CD4-positive, alpha-beta T cell (primary cell): ENCODE measurements at regions of chr4 and their contacts with region 1.

Region 1: GRCh38 chr4:77156533-77156911 is 485 bp upstream of the CCNG2 start:
- DNase-seq: peak; percentile 90 to 100 (median 96)
- ATAC-seq: peak; percentile 95
- H3K4me3 ChIP-seq: peak overlapping the region; percentile 89
- H3K4me3 Mint-ChIP-seq: peak overlapping the region; percentile 95
- H3K27ac ChIP-seq: peak overlapping the region; percentile 52 to 71
- H3K27ac Mint-ChIP-seq: peak overlapping the region; percentile 97
- H3K4me1 ChIP-seq: peaks cover 20% of the 10 kb centered on the region
- H3K4me1 Mint-ChIP-seq: peaks cover 54% of the 10 kb centered on the region
- H3K27me3 ChIP-seq: no peaks in the 10 kb centered on the region
- H3K27me3 Mint-ChIP-seq: peaks cover 5% of the 10 kb centered on the region
- CTCF ChIP-seq: no peak

Region 2: DNA sequence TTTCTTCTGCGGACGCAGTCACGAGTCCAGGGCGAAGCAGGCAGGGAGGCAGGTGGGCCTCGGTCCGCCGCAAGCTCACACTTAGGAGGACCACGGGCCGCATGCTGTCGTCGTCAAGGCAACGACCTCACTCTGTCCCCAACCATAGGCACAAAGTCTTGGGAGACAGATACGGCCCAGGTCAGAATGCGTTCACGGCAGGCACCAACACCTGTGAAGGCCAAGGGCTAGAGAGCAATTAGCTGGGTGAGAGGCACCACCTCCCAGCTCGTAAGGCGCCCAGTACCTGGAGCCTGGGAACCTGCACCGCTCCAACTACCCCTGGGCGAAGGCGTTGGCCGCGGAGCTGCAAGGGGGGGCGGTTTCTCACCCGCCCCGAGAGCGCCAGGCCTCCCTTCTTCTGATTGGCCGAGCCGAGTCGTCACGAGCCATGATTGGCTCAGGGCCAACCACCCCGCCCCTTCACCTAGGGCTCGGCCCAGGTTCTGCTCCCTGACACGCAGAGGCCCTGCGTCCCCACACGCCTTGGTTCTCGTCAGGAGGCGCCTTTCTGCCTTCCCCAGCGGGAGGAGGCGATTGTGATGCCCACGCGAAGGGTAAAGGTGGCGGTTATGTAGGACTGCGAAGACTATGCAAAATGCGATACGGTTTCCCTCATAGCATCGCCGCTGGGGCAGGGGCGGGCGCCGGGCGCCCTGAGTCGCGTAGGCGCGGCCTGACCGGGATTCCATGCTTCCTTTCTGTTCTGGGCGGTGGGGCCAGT is 1526.2 kb before region 1 on chr4 and contains the start of gene CDKL2:
- CTCF ChIA-PET with region 1: no interaction called
- POLR2A ChIA-PET with region 1: no interaction called
- intact Hi-C with region 1: loop called in 1 of 2 experiments (anchors 5 kb)
- DNase-seq: peak; percentile 88 to 96 (median 92)
- ATAC-seq: peak; percentile 99
- H3K4me3 ChIP-seq: peak within 1 kb of the TSS; percentile 85
- H3K4me3 Mint-ChIP-seq: peak within 1 kb of the TSS; percentile 90
- H3K27ac ChIP-seq: peak within 1 kb of the TSS in 1 of 2 donors; percentile 48
- H3K27ac Mint-ChIP-seq: peak within 1 kb of the TSS; percentile 75
- H3K4me1 ChIP-seq: peaks cover 16% of the 10 kb centered on the region
- H3K4me1 Mint-ChIP-seq: peaks cover 12% of the 10 kb centered on the region
- H3K27me3 ChIP-seq: no peaks in the 10 kb centered on the region
- H3K27me3 Mint-ChIP-seq: no peaks in the 10 kb centered on the region
- CTCF ChIP-seq: no peak
- total RNA-seq, gene CDKL2: 0.38 to 0.92 TPM

Region 3: DNA sequence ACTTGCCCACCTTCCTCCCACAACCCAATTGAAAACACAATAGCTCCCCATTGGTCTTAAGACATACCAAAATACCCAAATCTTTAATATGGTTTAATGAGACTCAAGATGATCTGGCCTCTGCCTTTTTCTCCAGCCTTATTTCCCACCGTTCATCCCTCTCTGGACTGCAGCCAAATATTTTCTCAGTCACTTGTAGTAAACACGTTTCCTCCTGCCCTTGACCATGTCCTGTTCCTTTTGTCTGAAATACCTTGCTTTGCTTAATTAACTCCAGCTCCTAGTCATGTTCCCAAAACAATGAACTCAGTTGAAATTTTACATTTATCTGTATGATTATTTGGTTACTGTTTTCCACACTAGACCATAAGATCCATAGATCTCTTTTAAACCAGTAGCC is 999.9 kb before region 1 on chr4:
- CTCF ChIA-PET with region 1: no interaction called
- POLR2A ChIA-PET with region 1: no interaction called
- intact Hi-C with region 1: loop called in 1 of 2 experiments (anchors 5 kb)
- DNase-seq: no peak
- ATAC-seq: no peak
- H3K4me3 ChIP-seq: no peak overlapping the region
- H3K4me3 Mint-ChIP-seq: no peak overlapping the region
- H3K27ac ChIP-seq: no peak overlapping the region
- H3K27ac Mint-ChIP-seq: no peak overlapping the region
- H3K4me1 ChIP-seq: no peaks in the 10 kb centered on the region
- H3K4me1 Mint-ChIP-seq: no peaks in the 10 kb centered on the region
- H3K27me3 ChIP-seq: no peaks in the 10 kb centered on the region
- H3K27me3 Mint-ChIP-seq: no peaks in the 10 kb centered on the region
- CTCF ChIP-seq: no peak

Region 4: GRCh38 chr4:76993787-76994641 is 162.5 kb before region 1 on chr4:
- CTCF ChIA-PET with region 1: no interaction called
- POLR2A ChIA-PET with region 1: interaction called, 4 read pairs
- intact Hi-C with region 1: loop called in 1 of 2 experiments (anchors 2 kb)
- DNase-seq: peak in 13 of 14 experiments; percentile 18 to 91 (median 37)
- ATAC-seq: peak; percentile 81
- H3K4me3 ChIP-seq: peak overlapping the region; percentile 16
- H3K4me3 Mint-ChIP-seq: peak overlapping the region; percentile 80
- H3K27ac ChIP-seq: peak overlapping the region in 1 of 2 donors; percentile 64
- H3K27ac Mint-ChIP-seq: peak overlapping the region; percentile 92
- H3K4me1 ChIP-seq: peaks cover 46% of the 10 kb centered on the region
- H3K4me1 Mint-ChIP-seq: peaks cover 81% of the 10 kb centered on the region
- H3K27me3 ChIP-seq: no peaks in the 10 kb centered on the region
- H3K27me3 Mint-ChIP-seq: no peaks in the 10 kb centered on the region
- CTCF ChIP-seq: no peak

Region 5: DNA sequence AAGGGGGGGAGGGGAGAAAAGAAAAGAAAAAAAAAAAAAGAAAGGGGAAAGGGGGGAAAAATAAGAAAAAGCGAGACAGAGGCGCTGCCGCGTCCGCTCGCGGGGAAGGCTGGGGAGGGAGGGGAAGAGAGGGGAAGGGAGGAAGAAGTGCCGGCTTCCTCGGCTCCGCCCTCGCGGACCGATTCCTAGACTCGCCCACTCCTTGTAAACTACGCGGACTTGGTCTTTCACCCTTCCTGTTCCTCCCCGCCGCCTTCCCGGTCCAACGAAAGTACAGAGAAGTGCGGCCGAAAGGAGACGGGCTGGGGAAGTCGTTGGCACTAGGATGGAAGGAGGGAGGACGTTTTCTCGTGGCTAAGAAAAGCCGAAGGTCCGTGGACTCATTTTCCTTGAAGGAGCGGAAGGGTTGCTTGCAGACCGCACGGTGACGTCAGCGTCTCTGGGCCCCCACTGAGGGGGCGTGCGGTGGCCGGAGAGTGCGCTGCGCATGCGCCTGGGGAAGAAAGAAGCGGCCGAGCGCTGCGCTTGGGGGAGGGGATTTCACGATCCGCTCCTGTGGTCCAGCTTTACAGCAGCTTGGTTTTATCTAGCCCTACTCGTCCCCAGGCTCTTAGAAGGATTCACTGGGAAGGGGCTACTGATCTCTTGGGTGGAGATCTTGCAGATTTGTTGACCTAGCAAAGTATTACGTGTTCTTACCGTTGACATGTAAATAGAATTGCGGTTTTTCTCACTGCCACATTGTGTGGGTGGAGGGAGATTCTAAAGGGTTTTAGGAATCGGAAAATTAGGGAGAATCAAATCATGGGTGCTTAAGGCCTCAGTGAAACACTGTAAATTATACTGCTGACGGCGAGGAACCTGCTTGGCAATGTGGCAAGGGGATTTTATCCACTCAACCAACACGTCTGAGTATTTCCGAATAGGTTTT is 80.4 kb before region 1 on chr4 and contains the start of gene CCNI:
- CTCF ChIA-PET with region 1: interaction called, 3 read pairs
- POLR2A ChIA-PET with region 1: interaction called, 76 read pairs
- intact Hi-C with region 1: loop called (anchors 1 to 2 kb)
- DNase-seq: peak; percentile 85 to 97 (median 90)
- ATAC-seq: peak; percentile 65
- H3K4me3 ChIP-seq: peak within 1 kb of the TSS; percentile 77
- H3K4me3 Mint-ChIP-seq: peak within 1 kb of the TSS; percentile 94
- H3K27ac ChIP-seq: peak within 1 kb of the TSS; percentile 99 to 100
- H3K27ac Mint-ChIP-seq: no peak within 1 kb of the TSS
- H3K4me1 ChIP-seq: peaks cover 21% of the 10 kb centered on the region
- H3K4me1 Mint-ChIP-seq: peaks cover 35% of the 10 kb centered on the region
- H3K27me3 ChIP-seq: no peaks in the 10 kb centered on the region
- H3K27me3 Mint-ChIP-seq: no peaks in the 10 kb centered on the region
- CTCF ChIP-seq: no peak
- total RNA-seq, gene CCNI: 385 to 418 TPM

Region 6: GRCh38 chr4:77203380-77204197 is 47.1 kb after region 1 on chr4:
- CTCF ChIA-PET with region 1: interaction called, 3 read pairs
- POLR2A ChIA-PET with region 1: no interaction called
- intact Hi-C with region 1: loop called in 1 of 2 experiments (anchors 5 kb)
- DNase-seq: peak; percentile 36 to 85 (median 56)
- ATAC-seq: peak; percentile 74
- H3K4me3 ChIP-seq: no peak overlapping the region
- H3K4me3 Mint-ChIP-seq: no peak overlapping the region
- H3K27ac ChIP-seq: no peak overlapping the region
- H3K27ac Mint-ChIP-seq: no peak overlapping the region
- H3K4me1 ChIP-seq: peaks cover 4% of the 10 kb centered on the region
- H3K4me1 Mint-ChIP-seq: no peaks in the 10 kb centered on the region
- H3K27me3 ChIP-seq: no peaks in the 10 kb centered on the region
- H3K27me3 Mint-ChIP-seq: no peaks in the 10 kb centered on the region
- CTCF ChIP-seq: peak; percentile 89